Left ventricle myocardium superior (tissue), 1 donor: ENCODE measurements at regions of chr21 and their contacts with region 1.

Region 1: GRCh38 chr21:45820171-45821091 is 161.1 kb upstream of the COL6A1 start:
- DNase-seq: peak; percentile 84
- ATAC-seq: peak; percentile 90

Region 2: DNA sequence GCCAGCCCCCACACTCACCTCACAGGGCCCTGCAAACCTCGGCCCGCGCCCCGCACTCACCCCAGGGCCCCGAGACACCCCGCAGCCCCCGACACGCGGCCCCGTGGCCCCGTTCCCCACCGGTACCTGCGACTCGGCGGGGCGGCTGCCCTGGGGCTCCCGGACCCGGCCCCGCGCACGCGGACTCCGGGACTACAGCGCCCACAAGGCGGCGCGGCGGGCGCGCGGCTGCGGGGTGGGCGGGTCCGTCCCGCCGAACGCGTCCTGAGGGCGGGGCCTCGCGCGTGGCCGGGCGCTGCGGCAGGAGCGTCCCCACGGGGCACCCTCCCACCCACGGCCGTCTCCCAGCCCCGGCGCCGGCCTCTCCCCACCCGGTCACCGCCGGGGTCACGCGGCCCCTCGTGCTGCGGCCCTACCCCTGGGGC is 278.2 kb before region 1 on chr21 and contains the start of gene SLC19A1:
- intact Hi-C with region 1: no loop called
- DNase-seq: peak; percentile 90
- ATAC-seq: peak; percentile 91
- total RNA-seq, gene SLC19A1: 7.6 TPM

Region 3: DNA sequence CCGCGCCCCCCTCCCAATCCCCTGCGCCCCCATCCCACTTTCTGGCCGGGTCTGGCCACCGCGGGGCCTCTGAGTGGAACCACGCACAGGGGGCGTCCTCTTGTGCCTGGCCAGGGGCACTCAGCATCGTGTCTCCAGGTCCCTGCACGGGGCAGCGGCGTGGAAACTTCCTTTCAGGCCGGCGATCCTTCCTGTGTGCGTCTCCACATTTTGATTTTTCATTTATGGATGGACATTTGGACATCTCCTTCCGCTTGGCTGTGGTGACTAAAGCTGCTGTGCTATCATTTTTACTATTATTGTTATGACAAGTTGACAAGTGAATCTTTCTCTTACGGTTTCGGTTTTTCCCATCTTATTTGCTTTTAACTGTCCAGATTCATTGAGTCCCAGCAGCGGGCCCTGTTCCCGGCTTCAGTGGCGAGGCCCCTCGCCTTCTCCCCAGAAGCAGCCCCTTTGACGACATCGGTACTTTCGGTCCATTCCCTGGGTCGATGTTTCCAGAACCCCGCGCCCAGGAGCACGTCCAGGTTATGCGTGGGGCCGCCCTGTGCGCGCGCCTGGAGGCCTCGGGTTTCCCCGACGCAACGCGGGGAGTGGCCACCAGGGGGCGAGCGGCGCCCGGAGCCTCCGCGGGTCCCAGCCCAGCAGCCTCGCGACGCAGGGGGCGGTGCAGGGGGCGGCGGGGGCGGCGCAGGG is 265.8 kb before region 1 on chr21:
- intact Hi-C with region 1: loop called (anchors 10 kb)
- DNase-seq: peak; percentile 93
- ATAC-seq: peak; percentile 80

Region 4: DNA sequence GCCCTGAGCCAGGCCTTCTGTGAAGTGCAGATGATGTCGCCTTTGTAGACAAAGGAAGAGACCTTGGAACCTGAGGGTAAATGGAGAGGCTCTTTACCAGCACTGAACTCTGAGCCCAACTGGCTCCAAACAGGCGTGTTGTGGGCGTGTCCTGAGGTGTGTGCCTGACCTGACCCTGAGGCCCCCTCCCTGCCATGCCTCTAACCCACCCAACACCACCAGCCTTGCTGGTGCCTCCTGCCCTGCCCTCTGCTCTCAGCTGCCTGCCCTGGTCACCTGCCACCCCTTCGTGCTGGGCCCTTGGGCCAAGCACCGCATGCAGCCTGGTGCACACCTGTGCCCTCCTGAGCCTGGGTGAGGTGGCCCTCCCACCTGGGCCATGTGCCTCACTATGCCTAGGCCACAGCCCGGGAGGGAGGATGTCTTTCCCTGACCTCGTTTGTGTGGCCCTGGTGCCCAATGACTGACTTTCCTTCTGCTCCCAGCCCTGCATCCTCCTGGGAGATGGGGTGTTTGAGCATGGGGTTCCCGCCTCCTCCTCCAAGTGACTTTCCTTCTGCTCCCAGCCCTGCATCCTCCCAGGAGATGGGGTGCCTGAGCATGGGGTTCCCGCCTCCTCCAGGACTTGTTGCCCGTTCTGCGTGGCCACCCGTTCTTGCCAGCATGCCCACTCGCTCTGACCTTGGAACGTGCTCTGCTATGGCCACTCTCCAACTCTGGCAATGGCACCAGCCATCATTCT is 19.9 kb before region 1 on chr21:
- intact Hi-C with region 1: no loop called
- DNase-seq: no peak
- ATAC-seq: no peak